Naive thymus-derived CD8-positive, alpha-beta T cell (primary cell): ENCODE measurements at regions of chr5 and their contacts with region 1.

Region 1: DNA sequence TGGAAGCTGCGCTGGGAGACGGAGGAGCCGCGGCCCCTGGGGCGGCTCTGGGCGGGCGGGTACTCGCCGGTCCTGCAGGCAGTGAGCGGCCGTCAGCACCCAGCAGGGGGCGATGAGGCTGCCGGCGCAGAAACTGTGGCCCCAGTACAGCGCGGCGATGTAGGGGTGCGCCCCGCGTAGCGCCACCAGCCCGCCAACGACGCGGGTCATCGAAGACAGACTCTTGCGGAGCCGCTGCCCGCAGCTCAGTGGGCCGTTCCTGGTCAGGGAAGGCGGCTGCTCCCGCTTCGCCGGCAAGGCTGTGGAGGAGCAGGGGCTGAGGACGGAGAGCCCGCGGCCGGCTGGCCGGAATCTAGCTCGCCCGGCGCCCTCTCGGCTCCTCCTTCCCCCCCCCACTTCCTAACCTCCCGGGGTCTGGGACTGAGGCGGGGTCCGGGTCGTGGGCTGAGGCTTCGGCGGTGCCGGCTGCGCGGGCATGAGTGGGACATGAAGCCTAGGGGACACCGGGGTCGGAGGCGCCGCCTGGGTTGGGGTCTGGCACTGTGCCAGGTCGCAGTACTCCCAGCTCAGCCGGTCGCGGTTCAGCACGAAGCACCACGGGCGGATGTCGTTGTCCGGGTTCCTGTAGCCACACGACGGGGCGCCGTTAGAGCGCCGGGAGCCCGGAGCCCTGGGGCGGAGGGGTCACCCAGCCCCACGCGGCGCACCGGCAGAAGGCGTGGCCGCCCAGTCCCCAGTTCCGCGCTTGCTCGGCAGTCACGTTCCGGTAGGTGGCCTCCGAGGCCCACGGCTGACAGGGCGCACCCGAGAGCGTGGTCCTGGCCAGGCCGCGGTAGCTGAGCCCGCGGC is 3.6 kb upstream of the PFN3 start:
- DNase-seq: peak; percentile 73 to 92 (median 82)
- ATAC-seq: peak; percentile 80 to 81
- H3K4me3 Mint-ChIP-seq: peak overlapping the region; percentile 60 to 89 (median 80)
- H3K27ac Mint-ChIP-seq: peak overlapping the region in 5 of 10 donors; percentile 27 to 88 (median 60)
- H3K4me1 Mint-ChIP-seq: peaks cover 2 to 47% (median 37%) of the 10 kb centered on the region in 4 donors
- H3K27me3 Mint-ChIP-seq: peaks cover 0 to 9% (median 0%) of the 10 kb centered on the region in 5 donors

Region 2: GRCh38 chr5:177311723-177312648 is 92.0 kb before region 1 on chr5 and contains the start of gene MXD3:
- POLR2A ChIA-PET with region 1: interaction called, 10 read pairs
- DNase-seq: peak; percentile 86 to 97 (median 92)
- ATAC-seq: peak; percentile 90 to 93
- H3K4me3 Mint-ChIP-seq: peak within 1 kb of the TSS; percentile 70 to 91 (median 84)
- H3K27ac Mint-ChIP-seq: peak within 1 kb of the TSS in 8 of 10 donors; percentile 43 to 83 (median 71)
- H3K4me1 Mint-ChIP-seq: peaks cover 12 to 42% (median 27%) of the 10 kb centered on the region in 4 donors
- H3K27me3 Mint-ChIP-seq: peaks cover 0 to 4% (median 0%) of the 10 kb centered on the region in 5 donors
- polyA plus RNA-seq, gene MXD3: 0.07 to 1.1 (median 0.44) TPM

Region 3: GRCh38 chr5:177327539-177328522 is 76.2 kb before region 1 on chr5:
- POLR2A ChIA-PET with region 1: no interaction called
- DNase-seq: peak in 1 of 10 donors; percentile 29
- ATAC-seq: peak; percentile 79 to 92
- H3K4me3 Mint-ChIP-seq: peak overlapping the region; percentile 27 to 79 (median 60)
- H3K27ac Mint-ChIP-seq: peak overlapping the region; percentile 61 to 96 (median 90)
- H3K4me1 Mint-ChIP-seq: peaks cover 3 to 40% (median 16%) of the 10 kb centered on the region in 4 donors
- H3K27me3 Mint-ChIP-seq: no peaks in the 10 kb centered on the region

Region 4: GRCh38 chr5:177351385-177352329 is 52.4 kb before region 1 on chr5 and contains the start of gene LMAN2:
- POLR2A ChIA-PET with region 1: interaction called, 12 read pairs
- DNase-seq: peak; percentile 76 to 96 (median 91)
- ATAC-seq: peak; percentile 98
- H3K4me3 Mint-ChIP-seq: peak within 1 kb of the TSS; percentile 95 to 100 (median 98)
- H3K27ac Mint-ChIP-seq: peak within 1 kb of the TSS; percentile 97 to 100 (median 100)
- H3K4me1 Mint-ChIP-seq: peaks cover 23 to 74% (median 70%) of the 10 kb centered on the region in 4 donors
- H3K27me3 Mint-ChIP-seq: no peaks in the 10 kb centered on the region
- polyA plus RNA-seq, gene LMAN2: 212 to 243 (median 242) TPM

Region 5: GRCh38 chr5:177425801-177426565 is 22.0 kb after region 1 on chr5:
- POLR2A ChIA-PET with region 1: interaction called, 285 read pairs
- DNase-seq: peak; percentile 94 to 100 (median 100)
- ATAC-seq: peak; percentile 82 to 84
- H3K4me3 Mint-ChIP-seq: peak overlapping the region; percentile 82 to 98 (median 94)
- H3K27ac Mint-ChIP-seq: peak overlapping the region; percentile 92 to 100 (median 98)
- H3K4me1 Mint-ChIP-seq: peaks cover 28 to 58% (median 49%) of the 10 kb centered on the region in 4 donors
- H3K27me3 Mint-ChIP-seq: no peaks in the 10 kb centered on the region

Region 6: DNA sequence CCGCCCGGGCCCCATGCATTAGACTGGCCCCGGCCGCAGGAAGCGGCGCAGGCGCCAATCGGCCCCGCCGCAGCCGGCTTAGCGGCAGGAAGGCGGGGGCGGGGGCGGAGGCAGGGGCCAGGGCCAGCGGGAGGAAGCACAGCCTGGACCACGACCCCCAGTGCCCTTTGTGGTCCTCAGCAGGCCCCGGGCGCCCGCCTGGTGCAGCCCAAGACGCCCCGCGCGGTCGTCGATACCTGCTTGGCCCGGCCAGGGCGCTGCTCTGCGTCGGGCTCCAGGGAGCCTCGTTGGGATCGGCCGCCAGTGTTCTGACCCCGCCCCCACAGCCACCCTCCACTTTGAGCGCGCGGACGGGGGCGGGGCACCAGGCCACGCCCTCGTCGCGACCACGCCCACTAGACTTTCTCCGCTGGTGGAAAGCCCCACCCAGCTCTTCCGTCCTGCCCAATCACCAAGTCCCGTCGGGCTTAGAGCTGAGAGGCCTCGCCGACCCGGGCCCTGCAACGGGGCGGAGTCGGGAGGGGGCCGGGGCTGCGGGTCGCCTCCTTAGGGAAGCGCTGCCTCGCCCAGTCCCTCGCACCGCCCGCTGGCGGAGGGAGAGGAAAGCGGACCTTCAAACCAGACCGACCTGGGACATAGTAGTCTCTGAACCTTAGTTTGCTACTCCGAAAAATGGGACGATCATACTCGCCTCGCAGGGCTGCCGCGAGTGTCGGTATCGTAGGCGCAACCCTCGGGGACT is 93.4 kb after region 1 on chr5 and contains the start of gene PDLIM7:
- POLR2A ChIA-PET with region 1: interaction called, 12 read pairs
- DNase-seq: peak; percentile 84 to 94 (median 92)
- ATAC-seq: peak; percentile 86 to 89
- H3K4me3 Mint-ChIP-seq: peak within 1 kb of the TSS; percentile 70 to 90 (median 84)
- H3K27ac Mint-ChIP-seq: peak within 1 kb of the TSS in 9 of 10 donors; percentile 20 to 90 (median 69)
- H3K4me1 Mint-ChIP-seq: peaks cover 18 to 55% (median 41%) of the 10 kb centered on the region in 4 donors
- H3K27me3 Mint-ChIP-seq: peaks cover 0 to 2% (median 0%) of the 10 kb centered on the region in 5 donors
- polyA plus RNA-seq, gene PDLIM7: 4.3 to 5.8 (median 5.3) TPM

Region 7: DNA sequence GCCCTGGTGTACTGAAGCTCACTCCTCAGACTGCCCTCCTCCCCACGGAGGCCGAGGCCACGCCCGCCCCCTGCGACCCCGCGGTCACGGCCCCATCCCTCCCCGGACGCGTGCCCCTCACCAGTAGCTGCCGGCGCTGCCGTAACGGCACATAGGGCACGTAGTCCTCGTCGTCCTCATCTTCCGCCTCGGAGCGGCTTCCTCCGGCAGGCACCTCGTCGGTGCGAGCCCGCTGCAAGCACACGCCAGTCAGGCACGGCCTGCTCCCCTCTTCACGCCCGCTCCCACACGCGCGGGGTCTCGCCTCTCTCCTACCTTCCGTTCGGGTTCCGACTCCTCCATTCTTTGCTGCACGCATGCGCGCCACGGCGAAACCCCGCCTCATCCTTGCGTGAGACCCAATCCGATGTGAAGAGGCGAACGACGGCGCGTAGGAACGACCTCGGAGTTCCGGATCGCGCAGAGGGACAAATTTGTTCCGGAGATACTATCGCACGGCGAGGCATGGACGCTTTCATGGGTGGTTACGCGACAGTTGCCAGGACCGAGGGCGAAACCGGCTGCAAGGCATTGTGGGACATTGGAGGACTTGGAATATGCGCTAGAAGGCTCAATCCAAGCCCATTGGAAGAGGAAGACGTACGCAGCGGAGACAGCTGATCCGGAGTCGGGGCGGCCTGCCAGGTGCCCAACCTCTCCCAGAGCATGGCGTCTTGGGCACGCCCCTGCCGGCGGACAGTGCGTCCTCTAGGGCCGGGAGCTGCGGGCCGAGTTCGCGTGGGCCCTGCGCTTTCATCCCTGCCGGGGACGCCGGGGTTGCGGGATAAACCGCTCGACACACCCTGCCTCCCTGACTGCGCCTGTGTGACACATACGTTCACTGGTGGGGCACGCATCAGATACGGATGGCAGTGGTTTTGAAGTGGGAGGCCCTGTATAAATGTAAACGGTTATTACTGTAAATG is 112.9 kb after region 1 on chr5 and contains the start of gene DDX41:
- POLR2A ChIA-PET with region 1: no interaction called
- DNase-seq: peak; percentile 90 to 97 (median 94)
- ATAC-seq: peak; percentile 91 to 93
- H3K4me3 Mint-ChIP-seq: peak within 1 kb of the TSS; percentile 93 to 100 (median 97)
- H3K27ac Mint-ChIP-seq: peak within 1 kb of the TSS; percentile 90 to 98 (median 95)
- H3K4me1 Mint-ChIP-seq: peaks cover 27 to 63% (median 55%) of the 10 kb centered on the region in 4 donors
- H3K27me3 Mint-ChIP-seq: no peaks in the 10 kb centered on the region
- polyA plus RNA-seq, gene DDX41: 29.0 to 54.4 (median 43.0) TPM